A673 (cell line): ENCODE measurements at regions of chr17 and their contacts with region 1.

Region 1: GRCh38 chr17:31524926-31525800 is 133.7 kb downstream of the RAB11FIP4 start:
- DNase-seq: peak; percentile 63
- H3K4me3 ChIP-seq: no peak overlapping the region
- H3K27ac ChIP-seq: no peak overlapping the region
- H3K4me1 ChIP-seq: no peaks in the 10 kb centered on the region
- H3K27me3 ChIP-seq: no peaks in the 10 kb centered on the region
- CTCF ChIP-seq: peak; percentile 67

Region 2: GRCh38 chr17:31388770-31389661 is 136.1 kb before region 1 on chr17:
- CTCF ChIA-PET with region 1: no interaction called
- POLR2A ChIA-PET with region 1: no interaction called
- intact Hi-C with region 1: loop called (anchors 2 kb)
- DNase-seq: peak; percentile 39
- H3K4me3 ChIP-seq: no peak overlapping the region
- H3K27ac ChIP-seq: no peak overlapping the region
- H3K4me1 ChIP-seq: no peaks in the 10 kb centered on the region
- H3K27me3 ChIP-seq: no peaks in the 10 kb centered on the region
- CTCF ChIP-seq: peak; percentile 64

Region 3: DNA sequence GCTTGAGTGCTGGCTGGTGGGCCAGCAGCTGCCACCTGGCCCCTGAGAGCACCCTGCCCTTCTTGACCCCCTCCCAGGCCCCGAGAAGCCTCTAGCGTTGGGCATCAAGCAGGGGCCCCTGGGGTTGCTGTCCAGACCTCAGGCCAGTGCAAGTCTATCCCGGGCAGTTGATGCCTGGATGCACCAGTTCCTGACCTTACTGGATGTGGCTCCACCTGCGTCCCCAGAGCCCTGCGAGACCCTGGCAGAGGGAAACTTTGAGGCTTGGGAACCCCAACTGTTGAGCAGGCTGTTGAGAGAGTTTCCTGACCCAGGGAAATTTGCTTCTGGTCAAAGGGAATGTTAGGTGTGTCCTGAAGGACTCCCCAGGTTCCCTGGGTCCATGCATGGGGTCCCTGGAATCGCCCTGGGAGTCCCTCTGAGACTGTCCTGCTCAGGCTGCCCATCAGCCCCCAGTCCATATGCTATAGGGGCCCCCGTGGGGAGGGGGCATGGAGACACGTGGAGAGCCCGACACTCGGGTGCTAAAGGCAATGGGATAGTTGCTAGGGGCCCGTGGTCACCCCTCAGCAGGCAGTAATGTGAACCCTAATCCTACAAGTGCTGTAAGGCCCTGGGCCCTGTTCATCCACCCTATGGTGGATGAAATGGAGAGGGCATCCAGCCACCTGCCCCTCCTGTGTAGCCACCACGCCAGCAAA is 87.3 kb before region 1 on chr17:
- CTCF ChIA-PET with region 1: no interaction called
- POLR2A ChIA-PET with region 1: no interaction called
- intact Hi-C with region 1: loop called (anchors 2 kb)
- DNase-seq: no peak
- H3K4me3 ChIP-seq: no peak overlapping the region
- H3K27ac ChIP-seq: no peak overlapping the region
- H3K4me1 ChIP-seq: no peaks in the 10 kb centered on the region
- H3K27me3 ChIP-seq: no peaks in the 10 kb centered on the region
- CTCF ChIP-seq: no peak